Left lung (tissue), 14 donors: ENCODE measurements at regions of chr3 and their contacts with region 1.

Region 1: DNA sequence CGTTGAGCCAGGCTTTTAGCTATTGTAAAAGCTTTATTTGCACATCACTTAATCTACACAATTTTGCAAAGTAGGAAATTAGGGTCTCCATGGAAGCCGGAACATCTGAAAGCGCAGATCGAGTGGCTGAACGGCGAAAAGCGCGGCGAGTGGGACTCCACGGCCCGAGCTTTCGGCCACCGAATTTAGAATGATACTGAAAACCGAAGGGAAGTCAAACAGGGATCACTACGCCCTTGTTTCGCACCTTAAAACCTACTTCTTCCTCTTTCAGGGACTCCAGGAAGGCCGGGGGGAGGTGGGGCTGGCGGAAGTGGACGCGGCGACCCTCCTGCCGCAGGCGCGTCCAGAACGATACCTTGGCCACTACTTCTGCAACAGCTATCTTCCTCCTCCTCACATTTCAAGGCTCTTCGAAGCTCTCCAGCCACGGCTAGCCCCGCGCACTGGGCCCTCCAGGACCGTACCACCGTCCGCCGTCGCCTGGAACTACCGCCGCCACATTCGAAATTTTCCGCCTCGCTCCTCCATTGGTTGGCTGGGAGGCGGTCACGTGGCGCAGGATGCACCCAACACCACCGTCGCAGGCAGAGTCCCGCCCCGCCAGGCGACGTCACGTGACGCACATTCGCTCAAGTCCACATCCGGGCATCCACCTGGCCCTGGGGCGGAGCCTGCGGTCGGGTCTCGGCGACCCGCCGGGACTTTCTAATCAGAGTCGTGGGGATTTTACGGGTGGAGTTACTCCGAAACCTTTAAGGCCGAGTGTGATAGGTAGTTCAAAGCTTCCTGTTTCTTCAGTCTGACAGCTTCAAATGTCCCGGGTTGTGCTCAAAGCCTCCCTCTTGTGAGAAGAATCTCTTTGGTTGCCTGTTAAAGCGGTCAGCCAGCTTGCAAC is at the start of gene SGO1:
- DNase-seq: peak; percentile 98 to 100 (median 99)
- ATAC-seq: peak; percentile 100
- H3K4me3 ChIP-seq: peak within 1 kb of the TSS; percentile 76
- H3K27ac ChIP-seq: peak within 1 kb of the TSS; percentile 91 to 95
- H3K4me1 ChIP-seq: peaks cover 0 to 18% of the 10 kb centered on the region in 2 donors
- H3K27me3 ChIP-seq: no peaks in the 10 kb centered on the region
- CTCF ChIP-seq: no peak
- polyA plus RNA-seq, gene SGO1: 6.5 to 16.0 (median 9.7) TPM

Region 2: GRCh38 chr3:20111836-20112235 is 74.1 kb before region 1 on chr3:
- intact Hi-C with region 1: loop called in 1 of 2 experiments (anchors 10 kb)
- DNase-seq: no peak
- ATAC-seq: no peak
- H3K4me3 ChIP-seq: no peak overlapping the region
- H3K27ac ChIP-seq: no peak overlapping the region
- H3K4me1 ChIP-seq: peaks cover 0 to 6% of the 10 kb centered on the region in 2 donors
- H3K27me3 ChIP-seq: no peaks in the 10 kb centered on the region
- CTCF ChIP-seq: no peak